K562 (cell line): ENCODE measurements at regions of chr1 and their contacts with region 1.

Region 1: DNA sequence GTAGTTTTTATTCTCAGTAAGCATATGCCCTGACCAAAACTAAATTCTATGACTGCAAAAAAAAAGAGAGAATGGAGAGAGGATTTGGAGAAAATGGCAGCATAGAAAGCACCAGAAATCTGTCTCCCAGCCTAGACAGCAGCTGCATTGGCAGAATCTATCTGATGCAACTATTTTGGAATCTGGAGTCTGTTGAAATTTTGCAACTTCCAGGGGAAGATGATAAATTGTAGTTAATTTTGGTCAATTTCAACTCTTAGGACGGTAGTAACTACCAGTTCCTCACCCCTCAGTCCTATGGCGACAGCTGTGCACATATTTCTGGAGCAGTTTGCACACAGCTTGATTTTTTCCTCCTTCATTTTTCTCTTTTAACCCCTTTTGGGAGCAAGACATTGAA is 10.9 kb downstream of the EXO5 start:
- DNase-seq: no peak
- ATAC-seq: no peak
- H3K4me3 ChIP-seq: no peak overlapping the region
- H3K27ac ChIP-seq: no peak overlapping the region
- H3K4me1 ChIP-seq: no peaks in the 10 kb centered on the region
- H3K27me3 ChIP-seq: peaks cover 0 to 4% of the 10 kb centered on the region in 2 experiments; a peak in 1 of 5 replicates
- CTCF ChIP-seq: no peak
- EP300 ChIP-seq: no peak
- POLR2A ChIP-seq: no peak
- RAD21 ChIP-seq: no peak

Region 2: DNA sequence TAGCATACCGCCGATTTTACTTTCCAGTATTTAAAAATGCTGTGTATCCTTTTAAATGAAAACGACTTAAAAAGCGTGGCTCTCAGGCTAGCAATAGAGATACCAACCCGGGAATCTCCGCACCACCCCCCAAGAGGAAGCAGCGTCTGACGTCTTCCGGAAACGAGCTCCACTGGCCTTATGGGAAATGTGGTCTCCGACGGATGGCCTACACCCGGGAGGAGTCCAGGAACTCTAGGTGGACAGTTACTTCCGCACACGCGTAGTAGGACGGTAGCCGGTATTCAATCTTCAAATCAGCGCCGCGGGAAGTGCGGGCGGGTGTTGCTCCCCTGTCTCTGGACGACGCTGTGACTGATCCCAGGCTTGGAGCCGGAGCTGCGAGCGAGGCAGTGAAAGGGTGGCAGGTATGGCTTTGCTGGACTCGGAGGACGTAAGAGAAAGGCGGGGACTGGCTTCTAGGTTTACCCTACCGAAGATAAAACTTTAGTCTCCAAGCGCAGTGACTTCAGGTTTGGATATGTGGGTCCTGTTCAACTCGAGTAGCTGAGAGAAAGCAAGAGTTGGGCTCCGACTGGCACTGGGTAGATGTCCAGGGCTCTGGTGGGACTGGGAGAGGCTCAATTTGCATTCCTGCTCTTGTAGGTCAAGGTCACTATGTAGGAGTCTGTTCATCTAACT is 12.0 kb after region 1 on chr1 and contains the start of gene ZNF684:
- CTCF ChIA-PET with region 1: no interaction called
- POLR2A ChIA-PET with region 1: interaction called, 14 read pairs
- in situ Hi-C with region 1: no loop called
- intact Hi-C with region 1: no loop called
- DNase-seq: peak; percentile 96 to 99 (median 96)
- ATAC-seq: peak; percentile 99
- H3K4me3 ChIP-seq: peak within 1 kb of the TSS; percentile 49
- H3K27ac ChIP-seq: peak within 1 kb of the TSS; percentile 69
- H3K4me1 ChIP-seq: peaks cover 0 to 5% of the 10 kb centered on the region in 2 experiments; a peak in 2 of 5 replicates
- H3K27me3 ChIP-seq: no peaks in the 10 kb centered on the region
- CTCF ChIP-seq: no peak; a peak in 1 of 6 replicates
- EP300 ChIP-seq: no peak; the same call in 1 of the 2 replicates
- POLR2A ChIP-seq: peak; percentile 89
- RAD21 ChIP-seq: no peak; a peak in 1 of 4 replicates
- polyA plus RNA-seq, gene ZNF684: 5.3 to 6.1 TPM